Dorsolateral prefrontal cortex (tissue), 120 donors: ENCODE measurements at regions of chr4 and their contacts with region 1.

Region 1: DNA sequence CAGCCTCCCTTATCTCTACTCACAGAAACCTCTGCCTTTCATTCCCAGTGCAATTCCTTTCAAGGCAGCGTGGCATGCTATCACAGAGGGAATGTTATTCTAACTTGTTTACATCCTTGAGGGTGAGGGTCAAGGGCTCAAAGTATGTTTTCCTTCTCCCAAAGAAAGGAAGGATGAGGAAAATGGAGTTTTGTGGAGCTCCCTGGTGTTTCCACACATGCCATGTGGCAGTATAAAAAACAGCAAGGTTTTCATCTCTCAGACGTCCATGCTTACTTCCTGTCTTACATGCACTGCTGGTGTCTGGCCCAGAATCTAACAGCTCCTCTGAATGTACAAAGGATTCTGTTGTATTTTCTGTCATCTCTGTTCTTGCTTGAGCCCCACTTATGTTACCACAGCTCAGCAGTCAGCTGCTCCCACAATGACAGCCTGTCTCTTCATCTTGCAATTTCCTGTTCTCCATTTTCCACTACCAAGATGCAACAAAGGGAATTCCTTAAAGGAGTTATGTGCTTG is 128.0 kb downstream of the SNCA start:
- DNase-seq: peak in 4 of 10 donors; percentile 5 to 66 (median 36)
- H3K4me3 ChIP-seq: peak overlapping the region in 13 of 59 donors; percentile 1 to 24 (median 18)
- H3K27ac ChIP-seq: peak overlapping the region in 57 of 59 donors; percentile 7 to 86 (median 70)
- H3K27me3 ChIP-seq: no peaks in the 10 kb centered on the region
- CTCF ChIP-seq: peak in 3 of 56 donors; percentile 11 to 20 (median 14)

Region 2: DNA sequence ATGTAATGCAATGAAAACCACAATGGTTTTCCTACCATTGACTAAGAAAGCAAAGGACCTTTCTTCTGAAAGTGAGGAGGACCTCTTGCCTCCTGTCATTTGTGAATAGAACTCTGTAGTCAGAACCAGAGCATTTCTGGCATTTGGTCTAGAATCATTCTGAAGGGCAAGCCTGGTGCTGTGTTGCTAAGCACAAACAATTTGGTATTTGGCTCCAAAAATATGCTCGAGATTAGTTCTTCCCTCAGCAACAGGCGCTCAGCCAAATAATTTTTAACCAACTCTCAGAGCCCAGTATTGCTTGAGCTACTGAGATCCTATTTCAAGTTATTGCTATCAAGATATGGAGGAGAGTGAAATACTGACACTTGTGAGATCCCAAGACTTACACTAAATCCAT is 57.0 kb after region 1 on chr4:
- intact Hi-C with region 1: loop called in 1 of 2 experiments (anchors 10 kb)
- DNase-seq: peak in 1 of 10 donors; percentile 76
- H3K4me3 ChIP-seq: peak overlapping the region in 2 of 59 donors; percentile 6 to 12
- H3K27ac ChIP-seq: peak overlapping the region in 37 of 59 donors; percentile 8 to 75 (median 44)
- H3K27me3 ChIP-seq: no peaks in the 10 kb centered on the region
- CTCF ChIP-seq: no peak